CD8-positive, alpha-beta T cell (primary cell): ENCODE measurements at regions of chr4 and their contacts with region 1.

Region 1: GRCh38 chr4:48906206-48907173 is at the start of gene OCIAD2:
- DNase-seq: peak; percentile 70 to 92 (median 89)
- ATAC-seq: peak; percentile 97
- H3K4me3 ChIP-seq: peak within 1 kb of the TSS; percentile 73 to 82
- H3K4me3 Mint-ChIP-seq: peak within 1 kb of the TSS; percentile 98
- H3K27ac ChIP-seq: peak within 1 kb of the TSS; percentile 64 to 71
- H3K27ac Mint-ChIP-seq: peak within 1 kb of the TSS; percentile 98
- H3K4me1 ChIP-seq: peaks cover 29% of the 10 kb centered on the region
- H3K4me1 Mint-ChIP-seq: peaks cover 49% of the 10 kb centered on the region
- H3K27me3 ChIP-seq: no peaks in the 10 kb centered on the region
- H3K27me3 Mint-ChIP-seq: no peaks in the 10 kb centered on the region
- CTCF ChIP-seq: peak; percentile 36
- total RNA-seq, gene OCIAD2: 70.6 to 72.1 TPM

Region 2: GRCh38 chr4:48578132-48578968 is 328.1 kb before region 1 on chr4:
- CTCF ChIA-PET with region 1: interaction called, 22 read pairs
- POLR2A ChIA-PET with region 1: interaction called, 5 read pairs
- intact Hi-C with region 1: loop called (anchors 1 kb)
- DNase-seq: peak in 8 of 9 experiments; percentile 9 to 78 (median 48)
- ATAC-seq: peak; percentile 98
- H3K4me3 ChIP-seq: no peak overlapping the region
- H3K4me3 Mint-ChIP-seq: no peak overlapping the region
- H3K27ac ChIP-seq: no peak overlapping the region
- H3K27ac Mint-ChIP-seq: peak overlapping the region; percentile 7
- H3K4me1 ChIP-seq: no peaks in the 10 kb centered on the region
- H3K4me1 Mint-ChIP-seq: peaks cover 3% of the 10 kb centered on the region
- H3K27me3 ChIP-seq: no peaks in the 10 kb centered on the region
- H3K27me3 Mint-ChIP-seq: no peaks in the 10 kb centered on the region
- CTCF ChIP-seq: peak; percentile 87

Region 3: DNA sequence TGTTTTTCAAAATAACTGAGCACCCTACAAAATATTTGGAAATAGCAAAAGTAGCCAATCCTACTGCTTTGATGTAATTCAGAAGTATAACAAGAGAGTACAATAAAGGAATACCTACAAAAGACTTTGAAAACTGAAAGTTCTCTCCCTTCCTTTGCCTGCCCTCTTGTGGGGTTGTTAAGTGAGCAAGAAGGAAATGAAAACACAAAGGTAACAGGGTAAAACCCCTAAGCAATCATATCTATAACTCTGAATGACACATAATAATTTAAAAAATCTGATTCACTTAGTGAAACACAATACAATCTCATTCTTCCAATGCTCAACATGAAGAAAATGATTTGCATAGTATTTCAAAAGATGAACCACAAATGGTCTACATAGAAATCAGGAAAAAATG is 224.6 kb before region 1 on chr4:
- CTCF ChIA-PET with region 1: no interaction called
- POLR2A ChIA-PET with region 1: no interaction called
- intact Hi-C with region 1: loop called in 1 of 2 experiments (anchors 5 kb)
- DNase-seq: peak in 2 of 9 experiments; percentile 36 to 58
- ATAC-seq: peak; percentile 71
- H3K4me3 ChIP-seq: no peak overlapping the region
- H3K4me3 Mint-ChIP-seq: no peak overlapping the region
- H3K27ac ChIP-seq: no peak overlapping the region
- H3K27ac Mint-ChIP-seq: peak overlapping the region; percentile 42
- H3K4me1 ChIP-seq: no peaks in the 10 kb centered on the region
- H3K4me1 Mint-ChIP-seq: peaks cover 47% of the 10 kb centered on the region
- H3K27me3 ChIP-seq: no peaks in the 10 kb centered on the region
- H3K27me3 Mint-ChIP-seq: no peaks in the 10 kb centered on the region
- CTCF ChIP-seq: peak; percentile 42

Region 4: DNA sequence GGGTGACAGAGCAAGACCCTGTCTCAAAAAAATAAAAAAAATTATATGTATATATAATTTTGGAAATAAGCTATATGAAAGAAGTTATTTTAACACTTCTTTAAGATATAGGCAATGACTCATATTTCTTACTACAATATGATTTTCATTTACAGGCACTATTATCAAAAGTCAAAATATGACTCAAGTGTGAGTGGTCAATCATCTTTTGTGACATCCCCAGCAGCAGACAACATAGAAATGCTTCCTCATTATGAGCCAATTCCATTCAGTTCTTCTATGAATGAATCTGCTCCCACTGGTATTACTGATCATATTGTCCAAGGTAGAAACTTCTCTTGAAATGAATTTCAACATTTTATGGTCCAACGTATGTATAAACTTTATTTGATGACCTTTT is 54.8 kb before region 1 on chr4:
- CTCF ChIA-PET with region 1: no interaction called
- POLR2A ChIA-PET with region 1: no interaction called
- intact Hi-C with region 1: loop called in 1 of 2 experiments (anchors 5 kb)
- DNase-seq: no peak
- ATAC-seq: no peak
- H3K4me3 ChIP-seq: no peak overlapping the region
- H3K4me3 Mint-ChIP-seq: no peak overlapping the region
- H3K27ac ChIP-seq: no peak overlapping the region
- H3K27ac Mint-ChIP-seq: no peak overlapping the region
- H3K4me1 ChIP-seq: no peaks in the 10 kb centered on the region
- H3K4me1 Mint-ChIP-seq: peaks cover 6% of the 10 kb centered on the region
- H3K27me3 ChIP-seq: no peaks in the 10 kb centered on the region
- H3K27me3 Mint-ChIP-seq: no peaks in the 10 kb centered on the region
- CTCF ChIP-seq: no peak

Region 5: GRCh38 chr4:48944756-48945241 is 38.3 kb after region 1 on chr4:
- CTCF ChIA-PET with region 1: interaction called, 13 read pairs
- POLR2A ChIA-PET with region 1: no interaction called
- intact Hi-C with region 1: loop called in 1 of 2 experiments (anchors 5 kb)
- DNase-seq: peak in 8 of 9 experiments; percentile 4 to 80 (median 41)
- ATAC-seq: peak; percentile 84
- H3K4me3 ChIP-seq: no peak overlapping the region
- H3K4me3 Mint-ChIP-seq: peak overlapping the region; percentile 47
- H3K27ac ChIP-seq: no peak overlapping the region
- H3K27ac Mint-ChIP-seq: peak overlapping the region; percentile 75
- H3K4me1 ChIP-seq: peaks cover 14% of the 10 kb centered on the region
- H3K4me1 Mint-ChIP-seq: peaks cover 32% of the 10 kb centered on the region
- H3K27me3 ChIP-seq: no peaks in the 10 kb centered on the region
- H3K27me3 Mint-ChIP-seq: no peaks in the 10 kb centered on the region
- CTCF ChIP-seq: peak; percentile 16